ENCODE measurements at regions of chr1 and their contacts with region 1.

Region 1: GRCh38 chr1:16055613-16056520 is 12.3 kb downstream of the CLCNKB start:
- DNase-seq: peak; percentile 96 to 98 (median 97)
- ATAC-seq: peak; percentile 92
- H3K4me3 ChIP-seq: no peak overlapping the region
- H3K27ac ChIP-seq: peak overlapping the region; percentile 82
- H3K4me1 ChIP-seq: peaks cover 32 to 44% of the 10 kb centered on the region in 2 experiments; a peak in 4 of 5 replicates
- H3K27me3 ChIP-seq: no peaks in the 10 kb centered on the region; a peak in 1 of 5 replicates
- CTCF ChIP-seq: peak; percentile 97 to 99 (median 99)
- EP300 ChIP-seq: peak; percentile 44
- POLR2A ChIP-seq: no peak; the same call in 1 of the 2 replicates
- RAD21 ChIP-seq: peak; percentile 95 to 99

Region 2: GRCh38 chr1:15803354-15803753 is 252.5 kb before region 1 on chr1:
- CTCF ChIA-PET with region 1: no interaction called
- POLR2A ChIA-PET with region 1: no interaction called
- in situ Hi-C with region 1: no loop called
- intact Hi-C with region 1: loop called (anchors 5 kb)
- DNase-seq: peak; percentile 32 to 63 (median 44)
- ATAC-seq: peak; percentile 70
- H3K4me3 ChIP-seq: no peak overlapping the region
- H3K27ac ChIP-seq: no peak overlapping the region
- H3K4me1 ChIP-seq: peaks cover 24 to 25% of the 10 kb centered on the region in 2 experiments
- H3K27me3 ChIP-seq: no peaks in the 10 kb centered on the region
- CTCF ChIP-seq: peak; percentile 59 to 70 (median 67)
- EP300 ChIP-seq: no peak
- POLR2A ChIP-seq: no peak
- RAD21 ChIP-seq: peak; percentile 12 to 66; a peak in 2 of 4 replicates

Region 3: DNA sequence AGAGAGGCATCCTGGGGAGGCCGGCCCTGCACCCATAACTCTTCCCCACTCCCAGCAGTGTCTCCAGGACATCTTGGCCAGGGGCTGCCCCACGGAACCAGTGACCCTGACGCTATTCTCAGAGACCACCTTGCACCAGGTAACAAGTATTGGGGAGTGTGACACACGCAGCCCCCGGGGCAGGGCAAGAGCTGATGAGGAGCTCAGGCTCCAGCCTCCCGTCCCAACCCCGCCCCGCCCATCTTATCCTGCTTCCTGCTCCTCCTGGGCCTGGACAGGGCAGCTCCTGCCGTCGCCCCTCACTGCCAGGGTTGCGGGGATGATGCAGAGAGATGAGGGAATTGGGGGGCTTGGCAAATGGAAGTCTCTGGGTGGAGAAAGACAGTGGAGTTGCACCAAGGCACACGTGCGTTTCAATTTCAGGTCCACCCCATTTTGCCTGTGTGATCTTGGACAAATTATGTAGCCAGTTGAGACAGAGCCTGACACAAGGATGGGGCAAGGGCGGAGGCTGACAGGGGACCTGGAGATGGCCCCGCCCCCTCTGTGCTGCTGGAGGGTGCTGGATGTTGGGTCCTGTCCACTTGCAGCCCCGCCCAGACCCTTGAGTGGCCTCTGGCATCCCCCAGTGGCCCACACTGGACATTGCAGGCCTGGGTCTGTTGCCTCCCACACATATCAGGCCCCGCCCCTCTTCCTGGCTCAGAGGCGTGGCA is 23.3 kb before region 1 on chr1:
- CTCF ChIA-PET with region 1: no interaction called
- POLR2A ChIA-PET with region 1: interaction called, 4 read pairs
- in situ Hi-C with region 1: no loop called
- intact Hi-C with region 1: loop called (anchors 1 kb)
- DNase-seq: peak; percentile 97 to 98 (median 98)
- ATAC-seq: peak; percentile 99
- H3K4me3 ChIP-seq: no peak overlapping the region
- H3K27ac ChIP-seq: no peak overlapping the region
- H3K4me1 ChIP-seq: peaks cover 4 to 42% of the 10 kb centered on the region in 2 experiments; a peak in 4 of 5 replicates
- H3K27me3 ChIP-seq: no peaks in the 10 kb centered on the region
- CTCF ChIP-seq: peak; percentile 98 to 99 (median 99)
- EP300 ChIP-seq: peak; percentile 47; the same call in 1 of the 2 replicates
- POLR2A ChIP-seq: no peak
- RAD21 ChIP-seq: peak; percentile 99 to 100

Region 4: GRCh38 chr1:16078925-16079656 is 23.2 kb after region 1 on chr1:
- CTCF ChIA-PET with region 1: no interaction called
- POLR2A ChIA-PET with region 1: no interaction called
- in situ Hi-C with region 1: no loop called
- intact Hi-C with region 1: no loop called
- DNase-seq: peak; percentile 71 to 87 (median 76)
- ATAC-seq: peak; percentile 84
- H3K4me3 ChIP-seq: no peak overlapping the region
- H3K27ac ChIP-seq: no peak overlapping the region
- H3K4me1 ChIP-seq: peaks cover 14 to 27% of the 10 kb centered on the region in 2 experiments; a peak in 4 of 5 replicates
- H3K27me3 ChIP-seq: peaks cover 0 to 3% of the 10 kb centered on the region in 2 experiments; a peak in 1 of 5 replicates
- CTCF ChIP-seq: peak; percentile 94 to 97 (median 97)
- EP300 ChIP-seq: no peak
- POLR2A ChIP-seq: no peak
- RAD21 ChIP-seq: peak; percentile 95 to 99